Aorta (tissue), 5 donors: ENCODE measurements at regions of chr2 and their contacts with region 1.

Region 1: DNA sequence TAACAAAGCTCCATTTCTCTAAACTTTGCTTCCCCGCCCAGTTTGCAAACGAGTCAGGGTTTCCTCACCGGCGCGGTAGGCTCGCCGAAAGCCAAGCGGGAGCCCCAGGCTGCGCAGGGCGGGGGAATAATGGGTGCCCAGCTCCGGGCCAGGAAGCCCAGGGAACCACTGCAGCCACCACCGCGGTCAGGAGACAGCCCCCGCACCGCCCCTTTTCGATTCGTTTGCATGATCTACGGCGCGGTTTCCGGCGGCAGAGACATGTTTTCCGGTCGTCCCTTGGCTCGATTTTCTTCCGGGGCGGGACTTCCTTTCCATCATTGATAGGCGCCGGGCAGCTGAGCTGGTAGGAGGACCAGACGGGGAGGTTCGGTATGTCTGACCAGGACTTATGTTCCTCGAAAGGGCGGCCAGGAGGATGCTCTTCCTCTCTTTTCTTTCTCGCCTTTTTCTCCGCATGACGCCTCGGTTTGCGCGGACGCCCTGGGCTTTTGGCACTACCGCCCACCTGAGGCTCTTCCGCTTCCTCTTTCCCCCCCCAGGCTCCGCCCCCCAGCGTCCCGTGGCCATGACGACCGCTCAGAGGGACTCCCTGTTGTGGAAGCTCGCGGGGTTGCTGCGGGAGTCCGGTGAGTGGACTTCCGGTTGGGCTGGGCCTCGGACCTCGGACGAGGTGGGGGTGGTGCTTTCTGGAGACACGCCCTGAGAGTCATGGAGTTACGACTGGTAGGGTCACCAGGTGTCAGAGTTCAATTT is at the start of gene STK11IP:
- DNase-seq: peak; percentile 98
- ATAC-seq: peak; percentile 97
- H3K4me3 ChIP-seq: peak within 1 kb of the TSS; percentile 59 to 72
- H3K27ac ChIP-seq: peak within 1 kb of the TSS; percentile 73 to 80
- H3K4me1 ChIP-seq: peaks cover 0 to 3% of the 10 kb centered on the region in 2 donors
- H3K27me3 ChIP-seq: no peaks in the 10 kb centered on the region
- total RNA-seq, gene STK11IP: 18.5 to 29.9 TPM

Region 2: GRCh38 chr2:219552382-219553167 is 45.2 kb before region 1 on chr2:
- intact Hi-C with region 1: loop called in 1 of 2 experiments (anchors 5 kb)
- DNase-seq: peak; percentile 90 to 97
- ATAC-seq: peak; percentile 91
- H3K4me3 ChIP-seq: peak overlapping the region; percentile 35 to 37
- H3K27ac ChIP-seq: no peak overlapping the region
- H3K4me1 ChIP-seq: no peaks in the 10 kb centered on the region
- H3K27me3 ChIP-seq: no peaks in the 10 kb centered on the region

Region 3: GRCh38 chr2:219571311-219572236 is 26.2 kb before region 1 on chr2 and contains the start of gene OBSL1:
- intact Hi-C with region 1: loop called in 1 of 2 experiments (anchors 1 kb)
- DNase-seq: peak; percentile 82 to 89
- ATAC-seq: peak; percentile 79
- H3K4me3 ChIP-seq: peak within 1 kb of the TSS; percentile 79 to 91
- H3K27ac ChIP-seq: peak within 1 kb of the TSS; percentile 47 to 76
- H3K4me1 ChIP-seq: no peaks in the 10 kb centered on the region
- H3K27me3 ChIP-seq: no peaks in the 10 kb centered on the region
- total RNA-seq, gene OBSL1: 65.3 to 76.7 TPM